Activated B cell treated with CpG ODN at 0.5 μM for 24 hours (primary cell): ENCODE measurements at regions of chr5 and their contacts with region 1.

Region 1: GRCh38 chr5:176994460-176995121 is 12.0 kb downstream of the UIMC1 start:
- DNase-seq: peak; percentile 32
- ATAC-seq: peak; percentile 89
- H3K4me3 Mint-ChIP-seq: peak overlapping the region; percentile 52
- H3K27ac Mint-ChIP-seq: peak overlapping the region; percentile 73
- H3K4me1 Mint-ChIP-seq: peaks cover 74% of the 10 kb centered on the region
- H3K27me3 Mint-ChIP-seq: no peaks in the 10 kb centered on the region
- CTCF ChIP-seq: no peak

Region 2: GRCh38 chr5:176341325-176342157 is 653.0 kb before region 1 on chr5:
- CTCF ChIA-PET with region 1: no interaction called
- POLR2A ChIA-PET with region 1: no interaction called
- intact Hi-C with region 1: no loop called
- DNase-seq: no peak
- ATAC-seq: no peak
- H3K4me3 Mint-ChIP-seq: no peak overlapping the region
- H3K27ac Mint-ChIP-seq: no peak overlapping the region
- H3K4me1 Mint-ChIP-seq: no peaks in the 10 kb centered on the region
- H3K27me3 Mint-ChIP-seq: no peaks in the 10 kb centered on the region
- CTCF ChIP-seq: no peak

Region 3: GRCh38 chr5:176647030-176647866 is 347.3 kb before region 1 on chr5 and contains the start of gene TSPAN17:
- CTCF ChIA-PET with region 1: no interaction called
- POLR2A ChIA-PET with region 1: no interaction called
- intact Hi-C with region 1: no loop called
- DNase-seq: peak; percentile 99
- ATAC-seq: peak; percentile 97
- H3K4me3 Mint-ChIP-seq: peak within 1 kb of the TSS; percentile 90
- H3K27ac Mint-ChIP-seq: peak within 1 kb of the TSS; percentile 91
- H3K4me1 Mint-ChIP-seq: peaks cover 45% of the 10 kb centered on the region
- H3K27me3 Mint-ChIP-seq: no peaks in the 10 kb centered on the region
- CTCF ChIP-seq: no peak
- total RNA-seq, gene TSPAN17: 20.7 and 27.7 TPM in 2 replicates

Region 4: GRCh38 chr5:177022384-177023308 is 28.1 kb after region 1 on chr5 and contains the start of gene ZNF346:
- CTCF ChIA-PET with region 1: interaction called, 3 read pairs
- POLR2A ChIA-PET with region 1: interaction called, 4 read pairs
- intact Hi-C with region 1: loop called (anchors 1 kb)
- DNase-seq: peak; percentile 80
- ATAC-seq: peak; percentile 99
- H3K4me3 Mint-ChIP-seq: peak within 1 kb of the TSS; percentile 95
- H3K27ac Mint-ChIP-seq: peak within 1 kb of the TSS; percentile 89
- H3K4me1 Mint-ChIP-seq: peaks cover 36% of the 10 kb centered on the region
- H3K27me3 Mint-ChIP-seq: no peaks in the 10 kb centered on the region
- CTCF ChIP-seq: no peak
- total RNA-seq, gene ZNF346: 28.0 and 31.4 TPM in 2 replicates